ENCODE measurements at regions of chr6 and their contacts with region 1.

Region 1: DNA sequence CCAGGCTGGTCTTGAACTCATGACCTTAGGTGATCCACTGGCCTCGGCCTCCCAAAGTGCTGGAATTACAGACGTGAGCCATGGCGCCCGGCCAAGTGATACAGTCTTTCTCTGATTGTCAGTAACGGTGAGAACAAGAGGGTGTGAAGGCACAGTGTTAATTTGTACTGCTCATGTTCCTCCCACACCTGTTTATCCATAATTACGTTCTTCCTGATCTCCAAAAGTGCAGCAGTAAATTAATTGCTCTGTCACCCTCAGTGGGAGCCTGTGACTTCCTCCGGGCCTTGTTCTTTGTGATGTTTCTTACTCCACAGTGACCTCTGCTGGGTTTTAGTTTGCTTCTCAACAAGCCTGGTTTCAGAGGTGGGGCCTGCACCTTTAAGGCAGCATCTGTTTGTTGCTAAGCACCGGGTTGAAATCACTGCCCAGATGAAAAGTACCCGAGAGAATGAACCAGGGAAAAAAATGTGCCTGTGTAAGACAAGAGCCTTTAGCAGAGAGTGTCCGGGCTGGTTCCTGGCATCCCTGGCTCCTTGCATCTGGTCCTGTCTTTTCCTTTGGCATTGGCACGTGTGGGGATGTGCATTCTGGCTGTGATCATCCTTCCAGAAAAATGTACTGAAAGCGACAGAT is 89.1 kb upstream of the CLDN20 start:
- DNase-seq: peak; percentile 79
- H3K27ac ChIP-seq: no peak overlapping the region
- CTCF ChIP-seq: peak; percentile 67

Region 2: GRCh38 chr6:154928325-154928922 is 246.3 kb before region 1 on chr6:
- CTCF ChIA-PET with region 1: interaction called, 10 read pairs
- POLR2A ChIA-PET with region 1: no interaction called
- DNase-seq: peak; percentile 65
- H3K27ac ChIP-seq: no peak overlapping the region
- CTCF ChIP-seq: peak; percentile 77

Region 3: GRCh38 chr6:154951345-154952200 is 223.1 kb before region 1 on chr6:
- CTCF ChIA-PET with region 1: no interaction called
- POLR2A ChIA-PET with region 1: no interaction called
- DNase-seq: peak; percentile 45
- H3K27ac ChIP-seq: no peak overlapping the region
- CTCF ChIP-seq: no peak

Region 4: DNA sequence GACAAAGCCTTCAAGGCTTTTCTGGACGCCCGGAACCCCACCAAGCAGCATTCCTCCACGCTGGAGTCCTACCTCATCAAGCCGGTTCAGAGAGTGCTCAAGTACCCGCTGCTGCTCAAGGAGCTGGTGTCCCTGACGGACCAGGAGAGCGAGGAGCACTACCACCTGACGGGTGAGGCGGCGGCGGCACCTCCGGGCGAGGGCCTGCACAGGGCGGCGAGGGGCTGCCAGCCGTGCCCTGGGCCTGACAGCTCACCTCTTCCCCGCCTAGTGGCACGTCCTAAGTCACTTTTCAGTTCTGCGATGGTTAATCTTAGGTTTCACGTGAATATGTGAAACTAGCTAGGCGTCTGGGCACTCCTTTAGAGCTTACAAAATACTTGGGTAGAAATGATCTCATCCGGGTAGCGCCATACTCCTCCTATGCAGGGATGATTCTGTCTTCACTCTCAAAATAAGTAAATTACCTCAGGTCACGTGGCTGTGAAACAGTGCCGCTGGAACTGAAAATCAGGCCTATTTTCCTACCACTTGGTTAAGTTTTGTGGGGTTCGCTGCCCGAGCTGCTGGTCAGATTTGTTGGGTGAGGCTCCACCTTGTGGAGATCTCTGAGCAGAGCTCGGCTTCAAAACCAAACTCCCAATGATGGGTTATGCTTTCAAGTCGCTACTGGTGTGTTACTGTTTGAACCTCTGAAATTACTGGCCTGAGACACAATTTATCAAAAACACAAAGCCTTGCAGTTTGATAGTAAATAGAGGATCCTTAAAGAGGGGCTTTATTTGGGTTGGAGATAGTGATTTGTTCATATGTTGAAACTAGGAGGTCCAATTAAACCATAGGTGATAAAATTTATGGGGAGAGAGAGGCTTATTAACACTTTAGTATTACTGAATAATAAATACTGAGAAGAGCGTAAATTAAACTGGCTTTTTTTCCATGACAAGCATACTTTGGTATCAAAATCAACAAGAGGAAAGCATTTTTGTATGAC is 73.6 kb after region 1 on chr6:
- CTCF ChIA-PET with region 1: interaction called, 35 read pairs
- POLR2A ChIA-PET with region 1: no interaction called
- DNase-seq: peak; percentile 73
- H3K27ac ChIP-seq: peak overlapping the region; percentile 56
- CTCF ChIP-seq: peak; percentile 75